ENCODE measurements at regions of chr2 and their contacts with region 1.

Region 1: DNA sequence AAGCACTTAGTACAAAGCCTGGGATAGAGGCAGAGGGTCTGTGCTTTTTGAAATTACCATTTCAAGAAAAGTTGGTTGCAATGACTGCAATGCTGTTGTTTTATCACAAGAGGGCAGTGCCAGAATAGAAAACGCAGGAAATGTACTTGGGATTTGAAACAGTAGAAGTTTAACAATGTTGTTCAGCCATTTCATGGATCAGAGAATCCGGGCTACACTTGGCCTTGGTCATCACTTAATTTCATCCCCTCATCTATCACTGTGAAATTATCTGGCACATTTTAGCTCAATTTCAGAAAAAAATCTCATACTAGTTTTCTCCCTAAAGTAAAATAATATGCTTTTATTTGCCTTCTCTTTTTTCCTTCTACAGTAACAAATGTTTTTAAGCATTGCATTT is 70.8 kb downstream of the RAPGEF4 start:
- DNase-seq: peak; percentile 18 to 68
- ATAC-seq: peak; percentile 73 to 74; a peak in 5 of 6 replicates
- H3K4me3 ChIP-seq: no peak overlapping the region
- H3K27ac ChIP-seq: no peak overlapping the region
- H3K4me1 ChIP-seq: no peaks in the 10 kb centered on the region
- CTCF ChIP-seq: peak; percentile 93
- EP300 ChIP-seq: no peak
- POLR2A ChIP-seq: no peak
- RAD21 ChIP-seq: peak; percentile 91 to 95

Region 2: GRCh38 chr2:172792698-172793097 is 13.8 kb before region 1 on chr2:
- CTCF ChIA-PET with region 1: interaction called, 39 read pairs
- POLR2A ChIA-PET with region 1: no interaction called
- DNase-seq: no peak
- ATAC-seq: no peak
- H3K4me3 ChIP-seq: no peak overlapping the region
- H3K27ac ChIP-seq: no peak overlapping the region
- H3K4me1 ChIP-seq: no peaks in the 10 kb centered on the region
- CTCF ChIP-seq: no peak
- EP300 ChIP-seq: no peak
- POLR2A ChIP-seq: no peak
- RAD21 ChIP-seq: no peak

Region 3: GRCh38 chr2:172921532-172922236 is 115.2 kb after region 1 on chr2:
- CTCF ChIA-PET with region 1: interaction called, 10 read pairs
- POLR2A ChIA-PET with region 1: no interaction called
- DNase-seq: peak in 1 of 2 experiments; percentile 12
- ATAC-seq: peak; percentile 43 to 81; a peak in 4 of 6 replicates
- H3K4me3 ChIP-seq: no peak overlapping the region
- H3K27ac ChIP-seq: no peak overlapping the region
- H3K4me1 ChIP-seq: peaks cover 12% of the 10 kb centered on the region
- CTCF ChIP-seq: no peak
- EP300 ChIP-seq: no peak
- POLR2A ChIP-seq: no peak
- RAD21 ChIP-seq: no peak

Region 4: GRCh38 chr2:173021939-173022371 is 215.5 kb after region 1 on chr2:
- CTCF ChIA-PET with region 1: interaction called, 31 read pairs
- POLR2A ChIA-PET with region 1: no interaction called
- DNase-seq: peak; percentile 35 to 78
- ATAC-seq: peak; percentile 82 to 91; a peak in 4 of 6 replicates
- H3K4me3 ChIP-seq: no peak overlapping the region
- H3K27ac ChIP-seq: peak overlapping the region; percentile 38 to 67; a peak in 5 of 6 replicates
- H3K4me1 ChIP-seq: peaks cover 11% of the 10 kb centered on the region
- CTCF ChIP-seq: peak; percentile 81
- EP300 ChIP-seq: no peak
- POLR2A ChIP-seq: no peak
- RAD21 ChIP-seq: peak; percentile 74 to 86

Measured in A549 (cell line).